ENCODE measurements at regions of chr16 and their contacts with region 1.

Region 1: DNA sequence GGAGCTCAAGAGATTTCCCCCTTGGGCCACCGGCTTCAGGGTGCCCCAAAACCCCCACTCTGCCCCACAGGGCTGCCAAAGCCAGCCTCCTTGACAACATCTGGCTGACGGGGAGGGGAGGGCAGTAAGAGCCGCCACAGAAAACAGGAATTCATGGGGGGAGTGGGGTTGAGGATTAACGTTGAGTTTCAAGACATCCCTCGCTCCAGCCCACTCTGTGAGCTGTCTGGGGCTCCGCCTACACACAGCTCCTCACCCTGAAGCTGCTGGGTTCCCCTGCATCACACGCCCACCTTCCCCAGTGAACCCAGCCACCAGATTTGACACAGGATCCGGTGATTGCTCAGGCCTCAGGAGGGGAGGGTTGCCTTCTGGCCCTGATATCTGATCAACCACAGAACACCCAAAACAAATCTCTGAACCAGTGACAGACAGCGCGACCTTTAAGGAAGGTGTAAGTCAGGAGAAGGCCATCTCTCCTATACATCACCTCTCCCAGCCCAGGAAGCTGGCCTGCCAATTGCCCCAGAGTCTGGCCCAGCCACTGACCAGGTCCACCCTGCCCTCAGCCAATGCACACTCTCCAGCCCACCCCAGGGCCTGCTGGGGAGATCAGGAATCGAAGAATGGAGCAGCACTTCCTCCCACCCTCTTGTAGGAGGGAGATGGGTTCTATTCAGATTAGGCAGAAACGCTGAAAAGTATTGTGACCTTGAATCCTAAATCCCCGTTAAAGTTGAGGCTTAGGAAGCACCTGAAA is 132.1 kb downstream of the CLEC16A start:
- DNase-seq: peak; percentile 72
- H3K4me3 Mint-ChIP-seq: no peak overlapping the region
- H3K27ac Mint-ChIP-seq: peak overlapping the region; percentile 79
- H3K4me1 Mint-ChIP-seq: peaks cover 95% of the 10 kb centered on the region
- H3K27me3 Mint-ChIP-seq: no peaks in the 10 kb centered on the region

Region 2: GRCh38 chr16:11094072-11094856 is 17.8 kb after region 1 on chr16:
- CTCF ChIA-PET with region 1: interaction called, 6 read pairs
- POLR2A ChIA-PET with region 1: interaction called, 15 read pairs
- DNase-seq: peak; percentile 72
- H3K4me3 Mint-ChIP-seq: peak overlapping the region; percentile 36
- H3K27ac Mint-ChIP-seq: peak overlapping the region; percentile 93
- H3K4me1 Mint-ChIP-seq: peaks cover 86% of the 10 kb centered on the region
- H3K27me3 Mint-ChIP-seq: no peaks in the 10 kb centered on the region